Naive thymus-derived CD4-positive, alpha-beta T cell (primary cell): ENCODE measurements at regions of chr2 and their contacts with region 1.

Region 1: GRCh38 chr2:64133828-64134227 is 10.4 kb downstream of the PELI1 start:
- DNase-seq: no peak
- ATAC-seq: no peak
- H3K4me3 ChIP-seq: no peak overlapping the region
- H3K4me3 Mint-ChIP-seq: peak overlapping the region in 2 of 10 donors; percentile 43 to 59
- H3K27ac ChIP-seq: no peak overlapping the region
- H3K27ac Mint-ChIP-seq: peak overlapping the region in 1 of 9 donors; percentile 68
- H3K4me1 ChIP-seq: peaks cover 4 to 41% of the 10 kb centered on the region in 2 donors
- H3K4me1 Mint-ChIP-seq: peaks cover 46 to 89% (median 85%) of the 10 kb centered on the region in 7 donors
- H3K27me3 ChIP-seq: no peaks in the 10 kb centered on the region
- H3K27me3 Mint-ChIP-seq: no peaks in the 10 kb centered on the region

Region 2: DNA sequence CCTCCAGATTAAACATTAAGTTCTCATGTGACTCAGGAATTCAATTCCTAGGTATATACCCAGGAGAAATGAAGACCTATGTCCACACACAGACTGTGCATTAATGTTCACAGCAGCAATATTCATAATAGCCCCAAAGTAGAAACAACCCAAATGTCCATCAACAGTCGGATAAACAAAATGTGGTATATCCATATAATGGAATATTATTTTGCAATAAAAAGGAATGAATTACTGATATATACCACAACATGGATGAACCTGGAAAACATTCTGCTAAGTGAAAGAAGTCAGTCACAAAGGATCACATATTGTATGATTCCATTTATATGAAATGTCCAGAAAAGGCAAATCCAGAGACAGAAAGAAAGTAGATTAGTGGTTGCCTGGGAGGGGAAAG is 10.1 kb before region 1 on chr2:
- CTCF ChIA-PET with region 1: no interaction called
- POLR2A ChIA-PET with region 1: interaction called, 5 read pairs
- intact Hi-C with region 1: loop called in 1 of 2 experiments (anchors 1 kb)
- DNase-seq: no peak
- ATAC-seq: no peak
- H3K4me3 ChIP-seq: no peak overlapping the region
- H3K4me3 Mint-ChIP-seq: no peak overlapping the region
- H3K27ac ChIP-seq: no peak overlapping the region
- H3K27ac Mint-ChIP-seq: peak overlapping the region in 3 of 9 donors; percentile 22 to 72 (median 26)
- H3K4me1 ChIP-seq: peaks cover 0 to 8% of the 10 kb centered on the region in 2 donors
- H3K4me1 Mint-ChIP-seq: peaks cover 28 to 89% (median 77%) of the 10 kb centered on the region in 7 donors
- H3K27me3 ChIP-seq: peaks cover 0 to 2% of the 10 kb centered on the region in 2 donors
- H3K27me3 Mint-ChIP-seq: no peaks in the 10 kb centered on the region